GM13976 (cell line): ENCODE measurements at regions of chrX and their contacts with region 1.

Region 1: GRCh38 chrX:39242187-39242586 is 440.9 kb downstream of the MID1IP1 start:
- DNase-seq: peak; percentile 6
- CTCF ChIP-seq: peak; percentile 35

Region 2: GRCh38 chrX:38754102-38754790 is 487.9 kb before region 1 on chrX:
- in situ Hi-C with region 1: loop called (anchors 25 kb)
- DNase-seq: peak; percentile 13
- CTCF ChIP-seq: peak; percentile 46

Region 3: DNA sequence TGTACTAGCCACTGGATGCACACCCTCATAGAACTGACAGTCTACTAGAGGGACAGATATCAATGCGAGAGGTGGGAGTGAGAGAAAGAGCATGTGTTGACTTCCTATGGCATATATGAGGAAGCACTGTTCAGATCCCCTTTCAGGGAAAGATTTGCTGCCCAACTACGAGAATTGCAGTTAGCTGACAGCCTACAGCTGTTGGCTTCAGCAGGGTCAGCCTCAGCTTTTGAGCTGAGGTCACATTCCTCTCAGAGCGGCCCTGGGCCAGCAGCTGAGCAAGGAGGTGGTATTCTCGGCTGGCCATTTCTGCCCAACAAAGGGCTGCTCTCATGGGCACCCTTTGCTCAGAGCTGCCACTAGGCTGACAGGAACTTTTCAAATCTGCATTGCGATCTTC is 139.2 kb after region 1 on chrX:
- in situ Hi-C with region 1: no loop called
- DNase-seq: no peak
- CTCF ChIP-seq: no peak